ENCODE measurements at regions of chr18 and their contacts with region 1.

Region 1: GRCh38 chr18:36095936-36096519 is 28.7 kb upstream of the RPRD1A start:
- DNase-seq: peak; percentile 85
- ATAC-seq: peak; percentile 69
- H3K4me3 ChIP-seq: no peak overlapping the region
- H3K27ac ChIP-seq: no peak overlapping the region
- H3K4me1 ChIP-seq: no peaks in the 10 kb centered on the region
- H3K27me3 ChIP-seq: peaks cover 2% of the 10 kb centered on the region
- CTCF ChIP-seq: peak; percentile 73
- POLR2A ChIP-seq: no peak
- RAD21 ChIP-seq: peak; percentile 84

Region 2: DNA sequence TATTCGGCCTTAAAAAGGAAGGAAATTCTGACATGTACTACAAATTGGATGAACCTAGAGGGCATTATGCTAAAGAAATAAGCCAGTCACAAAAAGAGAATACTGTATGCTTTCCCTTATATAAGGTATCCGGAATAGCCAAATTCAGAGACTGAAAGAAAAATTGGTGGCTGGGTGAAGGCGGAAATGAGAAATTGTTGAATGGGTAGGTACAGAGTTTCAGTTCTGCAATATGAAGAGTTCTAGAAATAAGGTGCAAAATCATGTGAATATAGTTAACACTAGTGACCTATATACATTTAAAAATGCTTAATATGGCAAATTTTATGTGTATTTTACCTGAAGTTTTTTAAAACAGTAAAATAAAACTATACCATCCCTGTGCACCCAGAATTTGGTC is 80.4 kb before region 1 on chr18:
- CTCF ChIA-PET with region 1: interaction called, 4 read pairs
- POLR2A ChIA-PET with region 1: no interaction called
- dilution Hi-C with region 1: no loop called
- in situ Hi-C with region 1: no loop called
- intact Hi-C with region 1: loop called (anchors 2 kb)
- DNase-seq: no peak
- ATAC-seq: no peak
- H3K4me3 ChIP-seq: no peak overlapping the region
- H3K27ac ChIP-seq: no peak overlapping the region
- H3K4me1 ChIP-seq: peaks cover 2% of the 10 kb centered on the region; the same call in 1 of the 2 replicates
- H3K27me3 ChIP-seq: no peaks in the 10 kb centered on the region
- CTCF ChIP-seq: no peak
- POLR2A ChIP-seq: no peak
- RAD21 ChIP-seq: no peak

Region 3: DNA sequence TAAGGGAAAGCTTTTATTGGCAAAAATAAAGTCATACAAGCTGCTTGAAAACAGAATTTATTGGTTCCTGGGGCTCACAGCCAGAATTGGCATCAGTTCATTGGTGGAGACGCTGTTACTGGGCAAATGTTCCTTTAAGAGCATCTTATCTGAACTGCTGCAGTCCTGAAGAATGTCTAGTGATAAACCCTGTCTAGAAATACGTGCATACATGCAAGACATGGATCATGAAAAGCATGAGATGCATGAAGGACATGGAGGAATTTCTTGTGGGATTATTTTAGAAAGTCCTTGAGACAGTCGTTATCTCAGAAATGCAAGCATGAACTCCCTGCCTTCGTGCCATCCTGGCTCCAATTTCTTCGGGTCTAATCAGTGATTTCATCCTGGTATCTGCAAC is 169.0 kb after region 1 on chr18:
- CTCF ChIA-PET with region 1: no interaction called
- POLR2A ChIA-PET with region 1: no interaction called
- dilution Hi-C with region 1: no loop called
- in situ Hi-C with region 1: no loop called
- intact Hi-C with region 1: no loop called
- DNase-seq: no peak
- ATAC-seq: no peak
- H3K4me3 ChIP-seq: no peak overlapping the region
- H3K27ac ChIP-seq: no peak overlapping the region
- H3K4me1 ChIP-seq: no peaks in the 10 kb centered on the region
- H3K27me3 ChIP-seq: no peaks in the 10 kb centered on the region
- CTCF ChIP-seq: no peak
- POLR2A ChIP-seq: no peak
- RAD21 ChIP-seq: no peak

Region 4: DNA sequence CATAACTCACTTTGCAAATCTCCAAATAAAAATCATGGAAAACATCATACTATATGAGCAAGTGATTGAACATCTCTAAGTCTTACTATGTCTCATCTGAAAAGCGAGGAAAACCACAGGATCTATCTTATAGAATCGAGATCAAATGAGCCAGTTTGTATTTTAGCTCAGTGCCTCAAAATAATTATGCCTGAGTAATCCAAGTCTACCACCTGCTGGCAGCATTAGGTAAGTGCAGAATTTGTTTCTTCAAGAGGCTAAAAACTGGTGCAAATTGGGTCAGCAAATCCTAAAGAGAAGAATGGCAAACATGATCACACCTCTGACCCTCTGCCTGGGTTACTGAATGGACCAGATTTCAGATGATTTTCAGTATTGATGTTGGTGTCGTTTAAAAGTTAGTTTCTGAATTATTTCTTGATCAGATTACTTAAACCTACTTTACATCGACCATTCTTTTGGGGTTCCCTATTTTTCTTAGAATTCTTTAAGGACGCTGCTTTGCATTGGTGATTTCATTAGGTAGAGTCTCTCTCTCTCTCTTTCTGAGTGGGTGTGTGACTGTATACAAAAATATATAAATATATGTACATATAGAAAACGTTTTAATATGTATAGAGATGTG is 188.8 kb after region 1 on chr18:
- CTCF ChIA-PET with region 1: interaction called, 9 read pairs
- POLR2A ChIA-PET with region 1: no interaction called
- dilution Hi-C with region 1: no loop called
- in situ Hi-C with region 1: loop called (anchors 5 kb)
- intact Hi-C with region 1: loop called (anchors 1 kb)
- DNase-seq: peak; percentile 74
- ATAC-seq: peak; percentile 89
- H3K4me3 ChIP-seq: no peak overlapping the region
- H3K27ac ChIP-seq: no peak overlapping the region
- H3K4me1 ChIP-seq: no peaks in the 10 kb centered on the region
- H3K27me3 ChIP-seq: peaks cover 4% of the 10 kb centered on the region
- CTCF ChIP-seq: peak; percentile 96
- POLR2A ChIP-seq: peak; percentile 59; the same call in 1 of the 2 replicates
- RAD21 ChIP-seq: peak; percentile 98

Region 5: DNA sequence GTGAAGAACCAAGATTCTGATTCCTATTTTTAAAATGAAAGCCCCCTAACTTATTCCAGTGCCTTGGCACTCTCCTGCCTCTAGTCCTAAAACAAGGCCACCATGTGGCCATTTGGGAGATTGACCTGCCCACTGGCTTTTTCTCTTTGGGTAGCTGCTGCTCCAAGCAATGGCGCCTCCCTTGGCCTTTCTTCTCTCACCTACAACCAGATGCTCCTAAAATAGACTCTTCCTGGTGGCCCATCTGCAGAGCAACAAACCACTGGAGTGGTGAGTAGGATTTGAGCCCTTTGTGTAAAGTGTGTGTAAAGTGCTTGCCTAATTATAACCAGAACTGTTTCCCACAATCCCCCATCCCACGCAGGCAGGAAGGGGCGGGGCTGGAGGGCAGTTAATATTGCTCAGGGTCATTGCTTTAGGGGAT is 315.7 kb after region 1 on chr18:
- CTCF ChIA-PET with region 1: no interaction called
- POLR2A ChIA-PET with region 1: no interaction called
- dilution Hi-C with region 1: no loop called
- in situ Hi-C with region 1: no loop called
- intact Hi-C with region 1: loop called (anchors 5 kb)
- DNase-seq: peak; percentile 19
- ATAC-seq: 0 out of 2 replicates have a peak, but pooled peaks have one; percentile 42
- H3K4me3 ChIP-seq: no peak overlapping the region
- H3K27ac ChIP-seq: no peak overlapping the region
- H3K4me1 ChIP-seq: no peaks in the 10 kb centered on the region
- H3K27me3 ChIP-seq: no peaks in the 10 kb centered on the region
- CTCF ChIP-seq: peak; percentile 46
- POLR2A ChIP-seq: no peak
- RAD21 ChIP-seq: peak; percentile 46

Region 6: GRCh38 chr18:36572135-36572856 is 476.3 kb after region 1 on chr18:
- CTCF ChIA-PET with region 1: no interaction called
- POLR2A ChIA-PET with region 1: no interaction called
- dilution Hi-C with region 1: no loop called
- in situ Hi-C with region 1: no loop called
- intact Hi-C with region 1: loop called (anchors 10 kb)
- DNase-seq: peak; percentile 49
- ATAC-seq: peak; percentile 73
- H3K4me3 ChIP-seq: no peak overlapping the region
- H3K27ac ChIP-seq: no peak overlapping the region
- H3K4me1 ChIP-seq: peaks cover 2% of the 10 kb centered on the region; the same call in 1 of the 2 replicates
- H3K27me3 ChIP-seq: no peaks in the 10 kb centered on the region
- CTCF ChIP-seq: peak; percentile 53
- POLR2A ChIP-seq: no peak
- RAD21 ChIP-seq: peak; percentile 58

Region 7: GRCh38 chr18:36661999-36662398 is 566.0 kb after region 1 on chr18:
- CTCF ChIA-PET with region 1: no interaction called
- POLR2A ChIA-PET with region 1: no interaction called
- dilution Hi-C with region 1: no loop called
- in situ Hi-C with region 1: no loop called
- intact Hi-C with region 1: loop called (anchors 10 kb)
- DNase-seq: peak; percentile 28
- ATAC-seq: peak; percentile 73
- H3K4me3 ChIP-seq: no peak overlapping the region
- H3K27ac ChIP-seq: no peak overlapping the region
- H3K4me1 ChIP-seq: peaks cover 6% of the 10 kb centered on the region
- H3K27me3 ChIP-seq: no peaks in the 10 kb centered on the region
- CTCF ChIP-seq: peak; percentile 48
- POLR2A ChIP-seq: no peak
- RAD21 ChIP-seq: peak; percentile 67

Region 8: DNA sequence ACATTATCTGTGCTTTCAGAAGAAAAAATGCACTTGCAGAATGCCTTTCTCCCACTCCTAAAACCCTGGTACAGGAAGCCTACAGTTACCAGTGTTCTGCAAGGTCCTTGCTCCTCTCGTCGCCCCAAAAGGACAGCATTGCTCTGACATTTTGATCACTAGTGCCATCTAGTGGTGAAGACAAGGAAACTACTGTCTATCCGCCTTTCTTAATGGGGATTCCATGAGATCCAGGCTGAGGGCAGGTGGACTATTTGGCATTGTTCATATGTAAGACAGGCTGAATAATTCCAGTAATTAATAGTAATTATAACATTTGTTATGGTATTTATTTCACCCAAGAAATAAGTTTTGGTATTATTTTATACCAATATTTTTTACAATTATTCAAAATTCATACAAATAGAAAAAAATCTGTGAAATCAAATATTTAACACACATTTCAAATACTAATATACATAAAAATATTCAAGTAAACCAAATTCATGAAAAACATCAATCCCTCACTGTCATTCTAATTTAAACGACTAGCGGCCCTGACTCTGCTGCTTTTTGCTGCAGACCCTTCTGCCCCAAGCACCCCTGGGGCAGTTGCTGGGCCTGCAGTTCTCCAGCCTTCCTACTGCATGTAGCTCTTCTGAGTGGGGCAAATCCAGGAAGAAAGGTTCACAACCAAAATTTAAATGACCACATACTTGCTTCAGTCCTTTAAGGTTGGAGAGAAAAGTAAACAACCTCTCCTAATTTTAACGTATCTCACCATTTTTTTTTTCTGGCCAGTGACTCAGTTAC is 713.8 kb after region 1 on chr18:
- CTCF ChIA-PET with region 1: interaction called, 4 read pairs
- POLR2A ChIA-PET with region 1: no interaction called
- dilution Hi-C with region 1: no loop called
- in situ Hi-C with region 1: no loop called
- intact Hi-C with region 1: loop called (anchors 5 kb)
- DNase-seq: peak; percentile 79
- ATAC-seq: peak; percentile 70
- H3K4me3 ChIP-seq: no peak overlapping the region
- H3K27ac ChIP-seq: no peak overlapping the region
- H3K4me1 ChIP-seq: peaks cover 17% of the 10 kb centered on the region
- H3K27me3 ChIP-seq: no peaks in the 10 kb centered on the region
- CTCF ChIP-seq: peak; percentile 75
- POLR2A ChIP-seq: no peak
- RAD21 ChIP-seq: peak; percentile 73

Measured in IMR-90 (cell line).